ENCODE measurements at regions of chr15 and their contacts with region 1.

Region 1: DNA sequence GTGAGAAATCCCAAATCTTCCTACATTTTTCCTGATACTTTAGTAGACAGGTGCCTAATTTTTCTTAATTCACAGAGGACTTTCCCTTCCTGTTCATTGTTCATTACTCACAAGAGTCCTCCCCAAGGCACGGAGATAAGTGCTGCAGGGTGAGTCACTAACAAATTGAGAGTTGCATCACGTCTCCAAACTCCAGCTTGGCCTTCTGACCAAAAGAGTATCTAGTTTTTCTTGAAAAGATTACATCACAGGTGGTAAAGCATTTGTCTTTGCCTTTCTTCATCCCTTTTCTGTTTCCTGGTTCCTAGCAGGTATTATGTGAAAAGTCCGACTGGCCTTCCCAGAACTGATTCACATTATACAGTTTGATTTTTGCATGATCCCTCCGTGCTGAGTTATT is 24.9 kb upstream of the RASGRP1 start:
- DNase-seq: peak in 1 of 4 donors; percentile 47
- ATAC-seq: peak; percentile 84
- H3K4me3 ChIP-seq: no peak overlapping the region
- H3K27ac ChIP-seq: no peak overlapping the region
- H3K4me1 ChIP-seq: peaks cover 0 to 4% of the 10 kb centered on the region in 2 donors
- H3K27me3 ChIP-seq: no peaks in the 10 kb centered on the region
- CTCF ChIP-seq: no peak

Region 2: DNA sequence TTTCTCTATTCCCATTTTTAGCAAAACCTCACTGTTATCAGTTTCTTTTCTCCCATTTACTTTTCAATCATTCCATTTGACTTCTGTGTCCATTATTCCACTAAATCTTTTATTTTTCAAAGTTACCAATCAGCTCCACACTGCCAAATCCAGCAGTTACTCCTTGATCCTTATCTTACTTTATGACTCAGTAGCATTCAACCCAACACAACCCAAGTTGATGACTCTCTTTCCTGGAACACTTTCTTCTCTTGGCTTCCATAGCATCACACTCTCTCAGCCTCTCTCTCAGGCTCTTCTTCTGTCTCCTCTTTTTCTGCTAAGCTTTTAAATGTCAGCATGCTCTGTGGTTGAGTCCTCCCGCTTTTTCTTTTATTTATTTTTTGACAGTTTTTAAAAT is 61.2 kb before region 1 on chr15:
- intact Hi-C with region 1: loop called in 1 of 2 experiments (anchors 10 kb)
- DNase-seq: no peak
- ATAC-seq: peak; percentile 27
- H3K4me3 ChIP-seq: no peak overlapping the region
- H3K27ac ChIP-seq: no peak overlapping the region
- H3K4me1 ChIP-seq: no peaks in the 10 kb centered on the region
- H3K27me3 ChIP-seq: no peaks in the 10 kb centered on the region
- CTCF ChIP-seq: no peak